ENCODE measurements at regions of chr5 and their contacts with region 1.

Region 1: DNA sequence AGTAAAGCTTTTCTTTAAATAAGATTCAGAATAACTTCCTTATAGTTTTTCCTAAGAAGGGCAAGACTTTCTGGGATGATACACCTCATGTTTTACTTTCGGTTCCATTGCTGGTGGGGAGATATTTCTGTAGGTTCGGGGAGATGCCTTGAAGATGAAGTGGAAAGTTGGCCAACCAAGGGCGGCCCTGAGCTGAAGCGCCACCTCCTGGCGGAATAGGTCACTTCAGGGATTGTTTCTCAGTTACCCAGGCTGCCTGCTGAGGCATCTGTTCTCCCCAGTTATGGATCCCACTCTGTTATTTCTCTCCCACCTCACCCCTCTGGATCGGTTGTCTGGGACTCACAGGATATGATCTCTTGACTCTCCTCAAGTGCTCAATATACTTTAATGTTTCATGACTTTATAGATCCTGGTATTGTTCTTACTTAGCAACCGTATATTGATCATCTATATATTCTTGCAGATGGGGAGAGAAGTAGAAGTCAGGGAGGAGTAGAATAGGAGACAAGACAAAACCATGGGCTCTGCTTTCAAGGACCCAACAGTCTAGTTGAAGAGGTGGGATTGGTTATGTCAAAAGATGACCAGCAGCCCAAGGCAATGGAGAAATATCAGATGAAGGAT is 23.4 kb downstream of the MEGF10 start:
- DNase-seq: peak in 1 of 2 experiments; percentile 43
- H3K4me3 ChIP-seq: no peak overlapping the region
- H3K27ac ChIP-seq: no peak overlapping the region
- H3K4me1 ChIP-seq: 0 out of 2 replicates have a peak, but pooled peaks cover 3% of the 10 kb centered on the region
- H3K27me3 ChIP-seq: no peaks in the 10 kb centered on the region
- CTCF ChIP-seq: peak; percentile 87

Region 2: DNA sequence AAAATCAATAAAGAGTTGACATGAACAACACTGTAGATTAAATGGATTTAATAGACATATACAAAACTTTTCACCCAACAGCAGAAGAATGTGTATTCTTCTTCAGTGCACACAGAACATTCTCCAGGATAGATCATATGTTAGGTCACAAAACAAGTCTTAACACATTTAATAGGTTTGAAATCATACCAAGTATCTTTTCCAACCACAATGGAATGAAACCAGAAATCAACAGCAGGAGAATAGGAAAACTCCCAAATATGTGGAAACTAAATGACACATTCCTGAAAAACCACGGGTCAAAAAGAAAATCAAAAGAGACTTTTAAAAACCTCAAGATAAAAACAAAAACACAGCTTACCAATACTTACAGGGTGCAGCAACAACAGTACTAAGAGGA is 1777.4 kb before region 1 on chr5:
- CTCF ChIA-PET with region 1: no interaction called
- POLR2A ChIA-PET with region 1: no interaction called
- intact Hi-C with region 1: no loop called
- DNase-seq: no peak
- H3K4me3 ChIP-seq: no peak overlapping the region
- H3K27ac ChIP-seq: no peak overlapping the region
- H3K4me1 ChIP-seq: no peaks in the 10 kb centered on the region
- H3K27me3 ChIP-seq: no peaks in the 10 kb centered on the region
- CTCF ChIP-seq: no peak

Region 3: GRCh38 chr5:126339215-126339805 is 974.6 kb before region 1 on chr5:
- CTCF ChIA-PET with region 1: interaction called, 10 read pairs
- POLR2A ChIA-PET with region 1: no interaction called
- intact Hi-C with region 1: no loop called
- DNase-seq: peak; percentile 30 to 50
- H3K4me3 ChIP-seq: no peak overlapping the region
- H3K27ac ChIP-seq: no peak overlapping the region
- H3K4me1 ChIP-seq: peaks cover 8% of the 10 kb centered on the region; the same call in 1 of the 2 replicates
- H3K27me3 ChIP-seq: no peaks in the 10 kb centered on the region
- CTCF ChIP-seq: peak; percentile 93

Region 4: DNA sequence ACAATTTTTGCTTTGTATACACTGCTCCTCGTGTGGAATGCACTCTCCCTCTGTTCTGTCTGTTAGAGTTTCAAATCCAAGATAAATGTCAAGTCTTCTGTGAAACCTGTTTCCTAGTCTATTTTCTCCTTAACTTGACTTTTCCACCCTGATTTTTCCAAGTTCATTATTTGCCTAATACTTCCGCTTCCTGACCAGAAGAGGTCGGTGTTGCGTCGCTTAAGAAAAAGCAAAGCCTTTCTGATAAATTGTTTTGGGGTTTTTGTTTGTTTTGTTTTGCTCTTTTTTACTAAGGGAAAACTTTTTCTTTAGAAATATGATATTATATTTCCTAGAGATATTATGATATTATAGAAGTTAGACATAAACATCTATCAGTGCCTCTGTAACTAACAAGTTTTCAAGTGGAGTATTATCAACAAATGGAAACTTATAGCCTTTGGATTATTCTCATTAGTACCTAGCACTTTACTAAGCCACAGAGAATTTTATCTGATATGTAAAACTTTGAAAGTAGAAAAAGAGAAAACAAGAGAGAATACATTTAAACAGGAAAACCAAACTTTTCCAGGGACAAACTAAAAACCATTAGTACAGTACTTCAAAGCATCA is 657.5 kb before region 1 on chr5:
- CTCF ChIA-PET with region 1: no interaction called
- POLR2A ChIA-PET with region 1: no interaction called
- intact Hi-C with region 1: loop called (anchors 1 kb)
- DNase-seq: peak in 1 of 2 experiments; percentile 42
- H3K4me3 ChIP-seq: no peak overlapping the region
- H3K27ac ChIP-seq: no peak overlapping the region
- H3K4me1 ChIP-seq: no peaks in the 10 kb centered on the region
- H3K27me3 ChIP-seq: no peaks in the 10 kb centered on the region
- CTCF ChIP-seq: peak; percentile 84

Region 5: GRCh38 chr5:126676195-126676624 is 637.8 kb before region 1 on chr5:
- CTCF ChIA-PET with region 1: no interaction called
- POLR2A ChIA-PET with region 1: no interaction called
- intact Hi-C with region 1: loop called (anchors 5 kb)
- DNase-seq: peak; percentile 45 to 46
- H3K4me3 ChIP-seq: no peak overlapping the region
- H3K27ac ChIP-seq: no peak overlapping the region
- H3K4me1 ChIP-seq: no peaks in the 10 kb centered on the region
- H3K27me3 ChIP-seq: no peaks in the 10 kb centered on the region
- CTCF ChIP-seq: peak; percentile 87

Region 6: DNA sequence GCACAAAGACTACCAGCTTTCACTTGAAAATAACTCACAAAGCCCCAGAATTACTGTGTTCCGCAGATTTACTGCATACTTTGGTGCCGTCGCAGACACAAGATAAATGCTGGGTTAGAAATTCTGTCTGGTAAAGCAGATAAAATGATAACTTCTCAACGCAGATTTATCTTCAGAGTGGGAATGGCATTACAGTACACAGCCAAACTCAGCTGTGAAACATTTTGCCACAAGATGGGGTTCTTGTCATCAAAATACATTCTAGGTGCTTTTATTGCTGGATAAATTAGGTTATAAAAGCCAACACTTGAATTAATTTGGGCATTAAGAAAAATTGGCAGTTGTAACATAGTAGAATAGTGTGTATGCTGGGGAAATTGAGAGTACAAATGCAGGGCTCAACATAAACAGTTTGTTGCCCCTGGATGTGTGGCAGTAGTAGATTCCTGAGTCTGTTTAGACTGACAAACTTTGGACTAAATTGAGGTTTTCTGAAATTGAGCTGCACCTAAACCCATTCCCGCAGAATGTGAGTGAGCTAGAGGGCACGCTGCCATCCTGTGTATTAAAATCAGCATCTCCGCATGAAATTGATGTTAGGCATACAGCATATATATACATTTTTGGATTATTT is 475.9 kb before region 1 on chr5:
- CTCF ChIA-PET with region 1: no interaction called
- POLR2A ChIA-PET with region 1: no interaction called
- intact Hi-C with region 1: loop called (anchors 5 kb)
- DNase-seq: no peak
- H3K4me3 ChIP-seq: no peak overlapping the region
- H3K27ac ChIP-seq: no peak overlapping the region
- H3K4me1 ChIP-seq: no peaks in the 10 kb centered on the region
- H3K27me3 ChIP-seq: no peaks in the 10 kb centered on the region
- CTCF ChIP-seq: peak; percentile 47; the same call in 1 of the 2 replicates

Region 7: DNA sequence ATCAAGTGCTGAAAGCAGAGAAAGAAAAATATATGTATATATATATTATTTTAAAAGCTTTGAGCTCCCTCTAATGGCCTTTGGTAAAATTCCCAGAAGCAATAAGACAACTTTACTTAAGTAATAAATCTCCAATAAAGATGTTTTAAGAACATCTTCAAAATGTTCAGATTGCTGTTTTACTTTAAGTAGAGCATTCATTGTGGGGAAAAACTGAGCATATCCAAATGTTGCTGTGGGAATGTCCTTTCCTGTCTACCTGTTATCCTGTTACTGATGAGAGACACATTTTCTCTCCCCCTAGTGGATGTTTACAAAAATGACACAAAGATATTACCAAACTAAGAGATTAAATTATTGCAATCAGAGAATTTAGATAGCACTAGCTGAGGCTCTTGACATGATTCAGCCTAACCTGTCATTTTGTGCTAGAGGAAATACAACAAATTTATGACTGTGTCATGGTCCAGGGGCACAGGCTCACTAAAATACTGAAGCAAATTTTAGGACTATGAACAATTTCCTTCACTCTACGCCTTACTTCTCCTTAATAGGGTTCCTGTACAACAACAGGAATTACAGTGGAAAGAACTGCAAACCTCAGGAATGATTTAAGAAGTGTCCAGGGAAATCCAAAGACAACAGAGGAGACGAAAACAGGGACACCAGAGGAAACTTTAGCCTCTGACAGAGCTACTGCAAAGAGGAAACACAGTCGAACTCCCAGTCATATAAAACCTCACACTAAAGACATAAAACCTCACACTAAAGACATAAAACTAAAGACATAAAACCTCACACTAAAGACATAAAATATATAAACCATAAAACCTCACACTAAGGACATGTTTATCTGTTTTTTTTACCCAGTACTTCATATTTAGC is 179.1 kb after region 1 on chr5:
- CTCF ChIA-PET with region 1: no interaction called
- POLR2A ChIA-PET with region 1: no interaction called
- intact Hi-C with region 1: loop called (anchors 10 kb)
- DNase-seq: peak in 1 of 2 experiments; percentile 37
- H3K4me3 ChIP-seq: no peak overlapping the region
- H3K27ac ChIP-seq: no peak overlapping the region
- H3K4me1 ChIP-seq: no peaks in the 10 kb centered on the region
- H3K27me3 ChIP-seq: no peaks in the 10 kb centered on the region
- CTCF ChIP-seq: peak; percentile 98

Measured in PC-9 (cell line).